HEK293 (cell line): ENCODE measurements at regions of chr9 and their contacts with region 1.

Region 1: GRCh38 chr9:14353222-14354056 is 39.5 kb upstream of the NFIB start:
- H3K4me3 ChIP-seq: no peak overlapping the region
- H3K27ac ChIP-seq: peak overlapping the region; percentile 28; the same call in 1 of the 2 replicates
- H3K4me1 ChIP-seq: peaks cover 3% of the 10 kb centered on the region; the same call in 1 of the 2 replicates
- CTCF ChIP-seq: peak; percentile 81

Region 2: DNA sequence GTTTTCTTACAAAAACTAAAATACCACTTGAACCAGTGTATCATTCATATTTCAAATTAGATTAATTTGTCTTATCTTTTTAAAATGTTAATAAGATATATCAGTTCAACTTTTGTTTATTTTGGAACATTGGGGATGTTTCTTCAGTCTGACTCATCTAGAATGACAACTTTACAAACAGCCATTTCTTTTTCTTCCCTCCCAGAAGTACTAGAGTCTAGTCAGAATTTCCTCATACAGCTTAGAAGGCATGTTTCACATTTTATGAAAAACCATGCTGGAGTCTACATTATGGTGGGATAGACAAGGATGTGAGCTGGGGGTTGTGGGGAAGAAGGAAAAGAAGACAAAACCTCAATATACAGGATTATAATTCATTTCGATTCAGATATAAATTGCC is 302.0 kb before region 1 on chr9:
- CTCF ChIA-PET with region 1: no interaction called
- POLR2A ChIA-PET with region 1: no interaction called
- H3K4me3 ChIP-seq: no peak overlapping the region
- H3K27ac ChIP-seq: no peak overlapping the region
- H3K4me1 ChIP-seq: no peaks in the 10 kb centered on the region
- CTCF ChIP-seq: no peak

Region 3: DNA sequence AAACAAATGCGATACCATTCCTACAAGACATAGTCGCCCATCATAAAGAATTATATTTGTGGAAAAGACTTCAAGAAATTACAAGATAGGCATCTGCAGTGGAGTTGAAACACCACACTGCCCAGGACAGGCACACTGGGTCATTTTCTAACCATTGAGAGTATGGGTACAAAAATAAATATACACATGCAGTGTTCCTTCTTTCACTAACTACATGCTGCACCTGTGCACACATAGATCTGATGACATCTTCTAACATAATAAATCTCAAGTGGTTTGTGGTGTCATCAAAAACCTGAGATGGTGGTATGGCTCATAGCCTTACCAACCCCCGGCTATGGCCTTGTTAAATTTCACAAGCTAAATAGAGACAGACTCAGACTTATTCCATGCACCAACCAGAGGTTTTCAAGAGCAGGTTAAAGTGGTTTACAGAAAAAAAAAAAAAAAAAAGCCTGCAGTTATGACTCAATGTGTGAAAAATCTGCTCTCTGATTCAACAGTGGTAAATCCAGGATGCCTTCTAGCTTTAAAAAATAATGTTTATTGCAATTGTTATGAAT is 27.1 kb before region 1 on chr9:
- CTCF ChIA-PET with region 1: interaction called, 27 read pairs
- POLR2A ChIA-PET with region 1: interaction called, 3 read pairs
- H3K4me3 ChIP-seq: no peak overlapping the region
- H3K27ac ChIP-seq: no peak overlapping the region
- H3K4me1 ChIP-seq: peaks cover 5% of the 10 kb centered on the region
- CTCF ChIP-seq: no peak

Region 4: DNA sequence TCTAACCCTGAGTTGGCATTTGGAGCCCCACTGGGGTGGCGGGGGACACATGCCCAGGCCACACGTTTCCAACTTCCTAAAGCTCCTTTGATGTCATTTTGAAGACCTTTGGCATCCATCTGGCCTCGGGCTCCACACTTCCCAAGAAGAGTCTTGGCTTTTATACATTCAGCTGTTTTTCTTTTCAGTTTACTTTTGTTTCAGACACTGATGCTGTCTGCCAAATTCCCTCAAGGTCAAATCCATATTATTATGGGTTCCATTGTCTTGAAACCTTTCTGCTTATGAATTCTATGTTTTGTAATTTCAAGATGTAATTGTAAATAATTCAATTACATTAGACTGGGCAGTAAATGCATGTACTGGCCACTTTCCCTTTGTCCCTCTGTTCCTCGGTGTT is 15.8 kb before region 1 on chr9:
- CTCF ChIA-PET with region 1: interaction called, 13 read pairs
- POLR2A ChIA-PET with region 1: no interaction called
- H3K4me3 ChIP-seq: no peak overlapping the region
- H3K27ac ChIP-seq: no peak overlapping the region
- H3K4me1 ChIP-seq: no peaks in the 10 kb centered on the region
- CTCF ChIP-seq: no peak

Region 5: GRCh38 chr9:14400658-14400995 is 47.2 kb after region 1 on chr9:
- CTCF ChIA-PET with region 1: interaction called, 14 read pairs
- POLR2A ChIA-PET with region 1: interaction called, 8 read pairs
- H3K4me3 ChIP-seq: no peak overlapping the region
- H3K27ac ChIP-seq: no peak overlapping the region
- H3K4me1 ChIP-seq: no peaks in the 10 kb centered on the region
- CTCF ChIP-seq: peak; percentile 48; the same call in 1 of the 2 replicates

Region 6: GRCh38 chr9:14415947-14416346 is 62.5 kb after region 1 on chr9:
- CTCF ChIA-PET with region 1: no interaction called
- POLR2A ChIA-PET with region 1: no interaction called
- H3K4me3 ChIP-seq: no peak overlapping the region
- H3K27ac ChIP-seq: no peak overlapping the region
- H3K4me1 ChIP-seq: peaks cover 12% of the 10 kb centered on the region; the same call in 1 of the 2 replicates
- CTCF ChIP-seq: no peak

Region 7: DNA sequence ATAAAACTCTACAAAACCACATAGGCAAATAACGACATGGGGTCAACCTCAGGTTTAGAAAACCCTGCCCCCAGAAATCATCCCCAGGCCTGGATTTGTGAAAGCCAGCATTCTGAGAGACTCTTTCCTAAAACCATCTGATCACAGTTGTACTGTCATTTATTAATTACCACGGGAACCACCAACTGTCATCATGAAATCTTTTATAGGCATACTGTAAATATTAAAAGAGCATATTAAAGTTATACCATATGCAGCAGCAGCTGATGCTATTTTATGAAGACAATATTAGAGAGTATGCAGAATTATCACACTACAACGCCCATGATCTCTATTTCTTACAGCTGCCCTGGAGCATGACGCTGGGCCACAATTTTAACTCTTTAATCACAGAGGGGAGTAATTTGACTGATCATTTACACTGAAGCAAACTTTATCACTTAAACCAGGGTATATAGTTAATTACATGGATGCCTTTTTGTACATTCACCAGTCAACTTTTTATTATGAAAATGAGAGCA is 348.8 kb after region 1 on chr9:
- CTCF ChIA-PET with region 1: no interaction called
- POLR2A ChIA-PET with region 1: no interaction called
- H3K4me3 ChIP-seq: no peak overlapping the region
- H3K27ac ChIP-seq: no peak overlapping the region
- H3K4me1 ChIP-seq: no peaks in the 10 kb centered on the region
- CTCF ChIP-seq: no peak